Activated CD4-positive, alpha-beta memory T cell treated with anti-CD3 and anti-CD28 coated beads for 36 hours (primary cell): ENCODE measurements at regions of chr13 and their contacts with region 1.

Region 1: GRCh38 chr13:38872693-38873092 is 117.9 kb downstream of the STOML3 start:
- DNase-seq: peak; percentile 56
- H3K4me3 Mint-ChIP-seq: no peak overlapping the region
- H3K27ac Mint-ChIP-seq: no peak overlapping the region
- H3K4me1 Mint-ChIP-seq: no peaks in the 10 kb centered on the region
- H3K27me3 Mint-ChIP-seq: peaks cover 6% of the 10 kb centered on the region

Region 2: GRCh38 chr13:38686577-38687245 is 186.0 kb before region 1 on chr13 and contains the start of gene FREM2:
- CTCF ChIA-PET with region 1: no interaction called
- POLR2A ChIA-PET with region 1: no interaction called
- intact Hi-C with region 1: loop called (anchors 1 kb)
- DNase-seq: no peak
- H3K4me3 Mint-ChIP-seq: no peak within 1 kb of the TSS
- H3K27ac Mint-ChIP-seq: no peak within 1 kb of the TSS
- H3K4me1 Mint-ChIP-seq: no peaks in the 10 kb centered on the region
- H3K27me3 Mint-ChIP-seq: peaks cover 22% of the 10 kb centered on the region
- total RNA-seq, gene FREM2: not detected

Region 3: DNA sequence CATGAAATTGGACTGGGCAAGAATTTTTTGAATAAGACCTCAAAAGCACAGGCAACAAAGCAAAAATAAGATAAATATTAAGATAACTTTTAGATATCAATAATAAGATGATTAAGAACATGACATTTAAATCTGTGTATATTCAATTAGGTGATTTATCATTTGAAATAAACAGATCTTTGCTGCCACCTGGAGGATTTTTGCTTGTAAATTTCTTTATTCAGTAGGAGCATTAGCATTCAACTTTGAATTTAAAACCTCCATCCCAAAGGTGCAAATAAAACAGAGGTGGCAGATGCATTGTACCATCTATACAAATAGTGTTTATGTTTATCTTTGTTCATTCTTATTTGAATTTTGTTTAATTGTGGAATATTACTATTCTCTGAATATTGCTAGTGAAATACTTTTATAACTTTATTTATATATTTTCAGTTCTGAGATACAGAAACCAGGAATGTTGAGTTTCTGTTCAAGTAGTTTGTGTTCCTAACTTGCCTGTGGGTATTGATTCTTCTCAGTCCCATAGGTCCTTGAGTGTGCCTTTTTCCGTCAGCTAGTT is 803.7 kb after region 1 on chr13:
- CTCF ChIA-PET with region 1: no interaction called
- POLR2A ChIA-PET with region 1: no interaction called
- intact Hi-C with region 1: no loop called
- DNase-seq: no peak
- H3K4me3 Mint-ChIP-seq: no peak overlapping the region
- H3K27ac Mint-ChIP-seq: no peak overlapping the region
- H3K4me1 Mint-ChIP-seq: no peaks in the 10 kb centered on the region
- H3K27me3 Mint-ChIP-seq: no peaks in the 10 kb centered on the region